ENCODE measurements at regions of chr11 and their contacts with region 1.

Region 1: DNA sequence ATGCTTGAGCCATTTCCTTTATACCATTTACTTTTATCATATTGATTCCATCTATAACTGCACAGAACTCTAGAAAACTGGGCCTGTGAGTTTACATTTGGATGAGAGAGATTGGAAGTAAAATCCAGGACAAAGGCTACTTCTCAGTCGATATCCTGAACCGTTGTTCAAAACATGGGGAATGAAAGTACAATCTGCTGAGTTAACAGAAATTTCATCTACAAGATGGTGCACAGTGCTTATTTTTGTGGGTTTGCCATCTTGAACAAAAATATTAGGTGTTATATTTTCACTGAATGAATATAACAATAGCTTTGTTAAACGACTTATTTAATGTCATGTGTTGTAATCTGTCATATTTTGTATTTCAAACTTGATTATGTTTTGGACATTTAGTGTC is 622.6 kb downstream of the LUZP2 start:
- DNase-seq: no peak
- H3K4me3 ChIP-seq: no peak overlapping the region
- H3K27ac ChIP-seq: no peak overlapping the region
- H3K4me1 ChIP-seq: no peaks in the 10 kb centered on the region
- H3K27me3 ChIP-seq: no peaks in the 10 kb centered on the region
- CTCF ChIP-seq: no peak
- POLR2A ChIP-seq: no peak

Region 2: GRCh38 chr11:26483108-26483507 is 1363.7 kb after region 1 on chr11:
- intact Hi-C with region 1: loop called (anchors 10 kb)
- DNase-seq: no peak
- H3K4me3 ChIP-seq: no peak overlapping the region
- H3K27ac ChIP-seq: no peak overlapping the region
- H3K4me1 ChIP-seq: no peaks in the 10 kb centered on the region
- H3K27me3 ChIP-seq: no peaks in the 10 kb centered on the region
- CTCF ChIP-seq: no peak
- POLR2A ChIP-seq: no peak

Measured in breast epithelium (tissue), 4 donors.